Activated CD4-positive, alpha-beta T cell treated with anti-CD3 and anti-CD28 coated beads for 36 hours (primary cell): ENCODE measurements at regions of chr6 and their contacts with region 1.

Region 1: GRCh38 chr6:142474531-142475289 is 172.9 kb downstream of the ADGRG6 start:
- DNase-seq: peak; percentile 10
- ATAC-seq: no peak
- H3K4me3 Mint-ChIP-seq: no peak overlapping the region
- H3K27ac Mint-ChIP-seq: no peak overlapping the region
- H3K4me1 Mint-ChIP-seq: peaks cover 5% of the 10 kb centered on the region
- H3K27me3 Mint-ChIP-seq: no peaks in the 10 kb centered on the region

Region 2: GRCh38 chr6:142146828-142147662 is 327.7 kb before region 1 on chr6 and contains the starts of genes NMBR and VTA1:
- CTCF ChIA-PET with region 1: interaction called, 6 read pairs
- POLR2A ChIA-PET with region 1: no interaction called
- intact Hi-C with region 1: loop called in 1 of 2 experiments (anchors 2 kb)
- DNase-seq: peak; percentile 98
- ATAC-seq: peak; percentile 98
- H3K4me3 Mint-ChIP-seq: peak within 1 kb of the TSS; percentile 97
- H3K27ac Mint-ChIP-seq: peak within 1 kb of the TSS; percentile 95
- H3K4me1 Mint-ChIP-seq: peaks cover 56% of the 10 kb centered on the region
- H3K27me3 Mint-ChIP-seq: no peaks in the 10 kb centered on the region
- total RNA-seq, gene NMBR: not detected
- total RNA-seq, gene VTA1: 55.6 to 73.9 TPM

Region 3: DNA sequence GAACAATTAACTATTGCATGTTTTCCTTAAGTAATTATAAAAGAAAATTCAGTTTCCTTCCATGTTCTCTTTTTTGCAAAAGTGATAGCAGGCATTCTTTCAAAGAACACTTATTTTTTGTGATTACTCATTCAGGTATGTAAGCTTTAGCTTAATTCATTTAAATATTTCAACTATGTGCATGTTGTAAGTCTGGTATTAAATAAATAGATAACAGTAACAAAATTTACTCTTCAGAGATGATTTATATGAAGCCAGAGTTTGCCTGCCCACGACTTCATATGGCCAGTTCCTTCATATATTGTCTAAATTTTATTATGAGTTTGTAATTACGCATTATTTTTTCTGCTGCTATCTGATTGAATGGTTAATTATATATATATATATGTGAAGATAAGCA is 62.1 kb before region 1 on chr6:
- CTCF ChIA-PET with region 1: no interaction called
- POLR2A ChIA-PET with region 1: no interaction called
- intact Hi-C with region 1: no loop called
- DNase-seq: no peak
- ATAC-seq: no peak
- H3K4me3 Mint-ChIP-seq: no peak overlapping the region
- H3K27ac Mint-ChIP-seq: no peak overlapping the region
- H3K4me1 Mint-ChIP-seq: peaks cover 43% of the 10 kb centered on the region
- H3K27me3 Mint-ChIP-seq: peaks cover 14% of the 10 kb centered on the region

Region 4: GRCh38 chr6:142537612-142538478 is 63.1 kb after region 1 on chr6:
- CTCF ChIA-PET with region 1: interaction called, 4 read pairs
- POLR2A ChIA-PET with region 1: no interaction called
- intact Hi-C with region 1: loop called (anchors 2 kb)
- DNase-seq: peak; percentile 52
- ATAC-seq: no peak
- H3K4me3 Mint-ChIP-seq: no peak overlapping the region
- H3K27ac Mint-ChIP-seq: no peak overlapping the region
- H3K4me1 Mint-ChIP-seq: peaks cover 2% of the 10 kb centered on the region
- H3K27me3 Mint-ChIP-seq: no peaks in the 10 kb centered on the region

Region 5: DNA sequence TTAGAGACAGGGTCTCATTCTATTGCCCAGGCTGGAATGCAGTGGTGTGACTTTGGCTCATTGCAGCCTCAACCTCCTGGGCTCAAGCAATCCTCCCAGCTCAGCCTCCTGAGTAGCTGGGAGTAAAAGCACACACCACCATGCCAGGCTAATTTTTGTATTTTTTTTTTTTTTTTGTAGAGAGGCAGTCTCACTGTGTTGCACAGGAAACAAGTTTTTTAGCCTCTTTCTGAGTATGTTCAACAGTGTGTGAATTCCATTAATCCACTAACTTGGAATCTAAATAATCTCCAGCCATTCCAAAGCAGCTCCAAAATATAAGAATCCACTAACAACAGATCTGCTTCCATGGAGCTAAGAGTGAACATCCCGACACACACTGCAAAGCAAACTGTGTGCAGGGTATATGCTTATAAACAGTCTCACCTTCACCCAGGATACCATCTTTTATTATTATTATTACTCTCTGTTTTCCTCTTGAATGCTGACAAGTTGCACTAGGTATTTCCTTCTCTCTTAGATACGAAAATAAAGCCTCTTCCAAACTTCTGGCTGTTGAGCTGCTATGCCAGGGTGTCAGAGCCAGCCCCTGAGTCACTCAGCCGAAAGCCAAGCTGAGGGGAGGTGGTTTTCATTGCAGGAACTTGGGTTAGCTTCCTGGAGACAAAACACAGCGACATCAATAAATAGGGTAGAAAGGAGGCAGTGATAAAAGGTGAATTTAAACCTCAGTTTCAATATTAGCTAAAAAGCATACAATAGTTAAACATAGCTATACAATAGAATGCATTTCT is 205.4 kb after region 1 on chr6:
- CTCF ChIA-PET with region 1: interaction called, 7 read pairs
- POLR2A ChIA-PET with region 1: no interaction called
- intact Hi-C with region 1: loop called in 1 of 2 experiments (anchors 5 kb)
- DNase-seq: peak; percentile 61
- ATAC-seq: peak; percentile 83
- H3K4me3 Mint-ChIP-seq: no peak overlapping the region
- H3K27ac Mint-ChIP-seq: no peak overlapping the region
- H3K4me1 Mint-ChIP-seq: peaks cover 18% of the 10 kb centered on the region
- H3K27me3 Mint-ChIP-seq: no peaks in the 10 kb centered on the region

Region 6: DNA sequence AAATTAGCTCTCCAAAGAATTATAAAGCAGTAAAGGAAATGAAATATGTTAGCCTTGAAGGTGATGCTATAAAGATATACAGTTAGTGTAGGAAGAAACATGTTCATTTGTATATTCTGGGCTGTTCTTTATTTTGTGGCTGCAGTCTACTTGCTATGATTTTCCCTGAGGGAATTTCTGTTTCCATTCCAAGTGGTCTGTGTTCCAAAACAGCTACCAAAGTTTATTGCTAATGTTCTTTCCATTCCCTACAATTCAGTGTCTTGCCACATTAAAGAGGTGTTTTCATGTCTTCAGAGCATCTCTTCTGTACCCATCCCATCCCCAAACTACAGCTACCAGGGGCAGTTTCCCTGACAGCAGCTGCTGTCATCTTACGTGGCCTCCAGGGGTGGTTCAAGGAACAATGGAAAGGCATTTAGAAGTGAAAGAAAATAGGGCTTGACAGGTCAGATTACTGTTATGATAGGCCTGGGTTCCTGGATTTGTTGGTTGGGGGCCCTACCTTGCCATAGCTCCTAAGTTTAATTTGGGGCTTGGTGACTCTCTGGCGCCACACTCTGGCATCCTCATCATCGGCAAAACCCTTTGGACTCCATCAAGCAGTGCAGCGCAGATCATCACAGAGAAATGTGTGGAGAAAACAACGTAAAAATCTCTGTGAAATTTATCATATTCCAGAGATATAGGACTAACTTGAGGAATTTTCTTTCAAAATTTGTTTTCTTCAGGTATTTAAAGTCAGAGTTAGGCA is 552.2 kb after region 1 on chr6:
- CTCF ChIA-PET with region 1: interaction called, 10 read pairs
- POLR2A ChIA-PET with region 1: no interaction called
- intact Hi-C with region 1: loop called (anchors 1 to 2 kb)
- DNase-seq: peak; percentile 76
- ATAC-seq: peak; percentile 83
- H3K4me3 Mint-ChIP-seq: no peak overlapping the region
- H3K27ac Mint-ChIP-seq: no peak overlapping the region
- H3K4me1 Mint-ChIP-seq: peaks cover 5% of the 10 kb centered on the region
- H3K27me3 Mint-ChIP-seq: no peaks in the 10 kb centered on the region

Region 7: DNA sequence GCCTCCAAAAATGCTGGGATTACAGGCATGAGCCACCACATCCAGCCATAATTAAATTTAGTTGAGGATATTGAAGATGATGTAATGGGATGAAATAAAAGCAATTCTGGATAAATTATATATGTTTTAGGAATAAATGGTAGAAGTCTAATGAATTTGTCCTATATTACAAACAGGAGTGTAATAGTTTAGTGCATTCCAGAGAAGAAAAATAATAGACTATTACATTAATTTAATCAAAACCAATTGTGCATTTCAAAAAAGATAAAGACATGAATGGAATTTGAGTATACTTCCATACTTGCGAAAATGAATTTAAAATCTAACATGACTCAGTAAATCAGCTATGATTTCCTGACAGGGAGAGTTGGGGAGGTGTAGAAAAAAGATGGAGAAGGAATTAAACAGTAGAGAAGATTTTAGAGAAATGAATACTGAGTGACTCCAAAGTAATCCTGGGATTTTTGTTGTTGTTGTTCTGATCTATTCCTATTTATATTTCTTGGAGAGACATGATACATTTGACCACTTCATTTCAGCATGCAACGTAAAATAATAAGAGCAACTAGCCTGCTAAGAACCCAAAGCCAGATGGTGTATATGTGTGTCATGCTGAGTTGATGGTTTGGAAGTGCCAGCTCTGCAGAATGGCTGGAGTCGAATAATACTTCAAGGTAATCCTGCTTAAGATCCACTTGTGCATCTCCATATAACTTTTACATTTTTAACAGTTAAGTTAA is 653.4 kb after region 1 on chr6:
- CTCF ChIA-PET with region 1: no interaction called
- POLR2A ChIA-PET with region 1: no interaction called
- intact Hi-C with region 1: no loop called
- DNase-seq: no peak
- ATAC-seq: no peak
- H3K4me3 Mint-ChIP-seq: no peak overlapping the region
- H3K27ac Mint-ChIP-seq: no peak overlapping the region
- H3K4me1 Mint-ChIP-seq: peaks cover 12% of the 10 kb centered on the region
- H3K27me3 Mint-ChIP-seq: no peaks in the 10 kb centered on the region

Region 8: GRCh38 chr6:144013486-144013909 is 1538.8 kb after region 1 on chr6:
- CTCF ChIA-PET with region 1: no interaction called
- POLR2A ChIA-PET with region 1: no interaction called
- intact Hi-C with region 1: loop called (anchors 10 kb)
- DNase-seq: peak; percentile 80
- ATAC-seq: no peak
- H3K4me3 Mint-ChIP-seq: no peak overlapping the region
- H3K27ac Mint-ChIP-seq: no peak overlapping the region
- H3K4me1 Mint-ChIP-seq: no peaks in the 10 kb centered on the region
- H3K27me3 Mint-ChIP-seq: peaks cover 14% of the 10 kb centered on the region